Aorta (tissue), 5 donors: ENCODE measurements at regions of chr3 and their contacts with region 1.

Region 1: DNA sequence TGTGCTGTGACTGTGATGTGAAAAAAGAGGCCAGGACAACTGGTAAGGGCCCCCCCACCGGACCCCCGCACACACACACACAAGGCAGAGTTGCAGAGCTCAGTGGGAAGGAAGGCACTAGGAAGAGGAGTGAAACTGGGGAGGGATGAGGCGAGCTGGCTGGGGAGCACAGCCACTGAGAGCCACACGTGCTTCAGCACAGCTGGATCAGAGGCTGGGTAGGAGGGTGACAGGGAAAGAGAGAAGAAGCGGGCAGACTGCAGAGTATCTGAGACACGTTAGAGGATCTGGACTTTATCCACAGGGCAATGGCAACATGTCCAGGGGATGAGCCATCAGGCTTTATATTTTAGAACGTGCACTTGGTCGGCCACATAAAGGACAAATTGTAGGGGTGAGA is 38.0 kb upstream of the TKT start:
- DNase-seq: no peak
- ATAC-seq: no peak
- H3K4me3 ChIP-seq: no peak overlapping the region
- H3K27ac ChIP-seq: no peak overlapping the region
- H3K4me1 ChIP-seq: no peaks in the 10 kb centered on the region
- H3K27me3 ChIP-seq: no peaks in the 10 kb centered on the region

Region 2: GRCh38 chr3:53236112-53236841 is 57.6 kb before region 1 on chr3:
- intact Hi-C with region 1: no loop called
- DNase-seq: peak; percentile 87 to 91
- ATAC-seq: peak; percentile 92
- H3K4me3 ChIP-seq: no peak overlapping the region
- H3K27ac ChIP-seq: peak overlapping the region in 1 of 2 donors; percentile 60
- H3K4me1 ChIP-seq: no peaks in the 10 kb centered on the region
- H3K27me3 ChIP-seq: no peaks in the 10 kb centered on the region

Region 3: GRCh38 chr3:53804821-53805788 is 511.2 kb after region 1 on chr3:
- intact Hi-C with region 1: loop called in 1 of 2 experiments (anchors 10 kb)
- DNase-seq: peak in 1 of 2 donors; percentile 77
- ATAC-seq: no peak
- H3K4me3 ChIP-seq: no peak overlapping the region
- H3K27ac ChIP-seq: no peak overlapping the region
- H3K4me1 ChIP-seq: no peaks in the 10 kb centered on the region
- H3K27me3 ChIP-seq: no peaks in the 10 kb centered on the region